Natural killer cell (primary cell): ENCODE measurements at regions of chr11 and their contacts with region 1.

Region 1: DNA sequence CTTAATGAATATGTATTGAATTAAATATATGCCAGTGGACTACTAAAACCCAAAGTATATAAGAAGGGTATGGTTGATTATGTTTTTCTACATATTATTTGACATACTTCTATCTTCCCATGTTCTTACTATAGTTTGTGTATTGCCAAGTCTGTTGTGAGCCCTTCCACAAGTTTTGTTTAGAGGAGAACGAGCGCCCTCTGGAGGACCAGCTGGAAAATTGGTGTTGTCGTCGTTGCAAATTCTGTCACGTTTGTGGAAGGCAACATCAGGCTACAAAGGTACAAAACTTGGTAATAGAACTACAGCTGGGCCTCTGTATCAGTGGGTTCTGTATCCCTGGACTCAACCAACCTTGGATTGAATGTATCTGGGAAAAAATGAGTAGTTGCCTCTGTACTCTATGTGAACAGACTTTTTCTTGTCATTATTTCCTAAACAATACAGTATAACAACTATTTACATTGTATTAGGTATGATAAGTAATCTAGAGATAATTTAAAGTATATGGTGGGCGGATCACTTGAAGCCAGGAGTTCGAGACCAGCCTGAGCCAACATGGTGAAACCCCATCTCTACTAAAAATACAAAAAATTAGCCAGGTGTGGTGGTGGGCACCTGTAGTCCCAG is 38.7 kb upstream of the TTC36 start:
- DNase-seq: peak; percentile 72 to 93
- ATAC-seq: peak; percentile 77 to 82 (median 79)
- H3K4me3 ChIP-seq: no peak overlapping the region
- H3K4me3 Mint-ChIP-seq: no peak overlapping the region
- H3K27ac ChIP-seq: no peak overlapping the region
- H3K27ac Mint-ChIP-seq: peak overlapping the region in 1 of 2 donors; percentile 72
- H3K4me1 ChIP-seq: no peaks in the 10 kb centered on the region
- H3K4me1 Mint-ChIP-seq: no peaks in the 10 kb centered on the region
- H3K27me3 ChIP-seq: no peaks in the 10 kb centered on the region
- H3K27me3 Mint-ChIP-seq: no peaks in the 10 kb centered on the region
- CTCF ChIP-seq: peak; percentile 83

Region 2: DNA sequence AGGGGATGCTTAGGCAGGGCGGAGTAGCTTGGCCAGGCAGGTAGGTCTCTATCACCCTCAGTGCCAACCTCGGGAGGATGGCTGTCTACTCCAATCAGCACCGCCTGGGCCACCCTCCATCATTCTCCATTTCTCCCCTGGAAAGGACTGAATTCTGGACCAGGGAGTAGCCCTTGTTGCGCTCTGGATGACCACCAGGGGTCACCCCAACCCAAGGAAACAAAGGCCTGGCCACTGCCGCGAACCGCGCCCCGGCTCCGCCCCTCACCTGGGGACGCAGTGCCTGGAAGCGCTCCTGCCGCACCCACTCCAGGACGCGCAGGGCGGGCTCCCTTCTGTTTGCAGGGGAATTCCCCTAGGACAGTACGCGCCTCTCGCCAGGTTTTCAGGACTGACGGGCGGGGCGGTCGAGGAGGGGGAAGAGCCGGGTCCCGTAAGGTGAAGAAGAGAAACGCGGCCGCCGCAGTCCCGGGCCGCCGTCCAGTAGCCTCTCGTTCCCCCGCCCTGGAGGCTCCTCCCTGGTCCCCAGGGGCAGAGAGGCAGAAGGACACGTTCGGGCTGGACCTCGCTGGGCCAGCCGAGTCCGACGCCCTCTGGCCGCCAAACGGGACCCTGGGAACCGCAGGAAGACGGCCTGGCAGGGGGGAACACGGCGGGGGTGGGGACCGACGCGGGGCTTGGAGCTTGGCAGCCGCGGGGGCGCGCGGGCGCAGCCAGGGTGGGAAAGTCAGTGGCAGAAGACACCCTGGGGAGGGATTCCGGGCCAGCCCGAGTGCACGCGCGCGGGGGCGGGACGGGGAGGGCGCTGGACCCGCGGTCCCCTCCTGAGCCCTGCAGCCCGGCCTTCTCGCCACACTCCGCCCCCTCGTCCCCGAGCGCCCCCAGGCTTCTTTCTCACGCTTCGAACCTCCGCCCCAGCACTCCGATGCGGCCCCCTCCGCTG is 343.0 kb before region 1 on chr11:
- intact Hi-C with region 1: loop called (anchors 1 kb)
- DNase-seq: peak; percentile 69 to 93
- ATAC-seq: peak; percentile 88 to 95 (median 94)
- H3K4me3 ChIP-seq: peak overlapping the region; percentile 63
- H3K4me3 Mint-ChIP-seq: peak overlapping the region; percentile 82
- H3K27ac ChIP-seq: no peak overlapping the region
- H3K27ac Mint-ChIP-seq: no peak overlapping the region
- H3K4me1 ChIP-seq: peaks cover 10% of the 10 kb centered on the region
- H3K4me1 Mint-ChIP-seq: peaks cover 0 to 4% of the 10 kb centered on the region in 2 donors
- H3K27me3 ChIP-seq: peaks cover 2% of the 10 kb centered on the region
- H3K27me3 Mint-ChIP-seq: peaks cover 47 to 72% of the 10 kb centered on the region in 2 donors
- CTCF ChIP-seq: peak; percentile 89

Region 3: DNA sequence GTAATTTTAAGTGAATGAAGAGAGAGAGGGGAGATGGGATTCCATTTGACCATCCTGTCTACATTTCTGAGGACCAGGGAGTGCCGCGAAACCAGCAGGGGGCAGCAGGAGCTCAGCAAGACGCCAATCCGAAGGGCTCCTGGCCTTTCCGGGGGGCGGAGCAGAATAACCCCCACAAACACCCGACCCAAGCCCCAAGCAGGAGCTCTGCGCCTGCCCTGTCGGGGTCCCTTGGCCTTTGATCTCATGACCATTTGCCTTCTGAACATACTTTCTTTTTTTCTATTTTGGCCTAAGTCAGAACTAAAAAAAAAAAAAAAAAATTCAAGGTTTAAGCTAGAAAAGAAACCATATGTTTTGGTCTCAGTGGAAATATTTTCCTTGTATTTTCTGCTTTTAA is 290.2 kb before region 1 on chr11:
- intact Hi-C with region 1: loop called (anchors 1 kb)
- DNase-seq: peak; percentile 79 to 90
- ATAC-seq: peak; percentile 75 to 91 (median 77)
- H3K4me3 ChIP-seq: no peak overlapping the region
- H3K4me3 Mint-ChIP-seq: no peak overlapping the region
- H3K27ac ChIP-seq: no peak overlapping the region
- H3K27ac Mint-ChIP-seq: peak overlapping the region in 1 of 2 donors; percentile 81
- H3K4me1 ChIP-seq: peaks cover 32% of the 10 kb centered on the region
- H3K4me1 Mint-ChIP-seq: peaks cover 5 to 11% of the 10 kb centered on the region in 2 donors
- H3K27me3 ChIP-seq: no peaks in the 10 kb centered on the region
- H3K27me3 Mint-ChIP-seq: no peaks in the 10 kb centered on the region
- CTCF ChIP-seq: peak; percentile 96

Region 4: GRCh38 chr11:118295834-118296454 is 192.7 kb before region 1 on chr11:
- intact Hi-C with region 1: loop called (anchors 5 kb)
- DNase-seq: peak in 1 of 2 donors; percentile 78
- ATAC-seq: peak in 2 of 3 donors; percentile 66 to 81
- H3K4me3 ChIP-seq: no peak overlapping the region
- H3K4me3 Mint-ChIP-seq: no peak overlapping the region
- H3K27ac ChIP-seq: no peak overlapping the region
- H3K27ac Mint-ChIP-seq: peak overlapping the region in 1 of 2 donors; percentile 75
- H3K4me1 ChIP-seq: peaks cover 7% of the 10 kb centered on the region
- H3K4me1 Mint-ChIP-seq: peaks cover 14 to 27% of the 10 kb centered on the region in 2 donors
- H3K27me3 ChIP-seq: no peaks in the 10 kb centered on the region
- H3K27me3 Mint-ChIP-seq: peaks cover 3 to 6% of the 10 kb centered on the region in 2 donors
- CTCF ChIP-seq: peak; percentile 67

Region 5: GRCh38 chr11:118364956-118365615 is 123.5 kb before region 1 on chr11:
- intact Hi-C with region 1: loop called (anchors 5 kb)
- DNase-seq: no peak
- ATAC-seq: no peak
- H3K4me3 ChIP-seq: no peak overlapping the region
- H3K4me3 Mint-ChIP-seq: no peak overlapping the region
- H3K27ac ChIP-seq: no peak overlapping the region
- H3K27ac Mint-ChIP-seq: no peak overlapping the region
- H3K4me1 ChIP-seq: peaks cover 7% of the 10 kb centered on the region
- H3K4me1 Mint-ChIP-seq: peaks cover 22 to 34% of the 10 kb centered on the region in 2 donors
- H3K27me3 ChIP-seq: no peaks in the 10 kb centered on the region
- H3K27me3 Mint-ChIP-seq: no peaks in the 10 kb centered on the region
- CTCF ChIP-seq: no peak

Region 6: DNA sequence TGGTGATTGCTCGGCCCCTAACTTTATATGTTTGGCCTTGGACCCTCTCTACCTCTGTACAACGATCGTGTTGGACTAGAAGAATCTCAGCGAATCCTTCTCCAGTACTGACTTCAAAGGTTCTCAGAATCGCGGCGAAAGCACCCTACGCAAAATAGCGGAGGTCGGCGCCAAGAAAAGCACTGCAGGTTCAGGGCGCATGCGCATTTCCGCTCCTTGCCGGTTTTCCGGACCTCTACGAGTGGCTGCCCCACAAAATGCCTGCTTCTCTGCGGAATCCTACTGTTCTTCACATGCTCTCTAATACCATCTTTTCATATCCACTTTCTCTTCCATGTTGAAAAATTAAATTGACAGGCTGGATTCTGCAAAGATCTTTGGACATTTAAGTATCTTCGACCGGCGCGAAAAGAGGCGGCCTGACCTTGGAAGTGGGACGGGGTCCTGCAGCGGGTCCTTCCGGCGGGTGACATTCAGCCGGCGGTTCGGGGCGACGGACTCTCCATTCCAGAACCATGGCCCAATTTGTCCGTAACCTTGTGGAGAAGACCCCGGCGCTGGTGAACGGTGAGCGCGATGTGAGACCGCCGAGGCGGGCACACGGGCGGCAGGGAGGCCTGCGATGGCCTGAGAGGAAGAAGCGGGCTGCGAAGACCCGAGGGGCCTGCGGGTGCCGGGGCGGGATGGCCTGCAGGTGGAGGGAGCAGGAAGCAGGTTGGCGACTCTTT is 87.3 kb before region 1 on chr11 and contains the start of gene ATP5MG:
- intact Hi-C with region 1: loop called (anchors 1 kb)
- DNase-seq: peak; percentile 83 to 98
- ATAC-seq: peak; percentile 81 to 84 (median 83)
- H3K4me3 ChIP-seq: peak within 1 kb of the TSS; percentile 77
- H3K4me3 Mint-ChIP-seq: peak within 1 kb of the TSS; percentile 100
- H3K27ac ChIP-seq: peak within 1 kb of the TSS; percentile 86
- H3K27ac Mint-ChIP-seq: peak within 1 kb of the TSS; percentile 99
- H3K4me1 ChIP-seq: peaks cover 15% of the 10 kb centered on the region
- H3K4me1 Mint-ChIP-seq: peaks cover 43 to 50% of the 10 kb centered on the region in 2 donors
- H3K27me3 ChIP-seq: no peaks in the 10 kb centered on the region
- H3K27me3 Mint-ChIP-seq: no peaks in the 10 kb centered on the region
- CTCF ChIP-seq: no peak
- total RNA-seq, gene ATP5MG: 90.3 to 135 (median 107) TPM

Region 7: GRCh38 chr11:118438314-118438931 is 50.2 kb before region 1 on chr11:
- intact Hi-C with region 1: loop called (anchors 2 kb)
- DNase-seq: peak; percentile 49 to 85
- ATAC-seq: peak; percentile 45 to 52 (median 46)
- H3K4me3 ChIP-seq: peak overlapping the region; percentile 69
- H3K4me3 Mint-ChIP-seq: peak overlapping the region; percentile 94
- H3K27ac ChIP-seq: peak overlapping the region; percentile 78
- H3K27ac Mint-ChIP-seq: peak overlapping the region; percentile 94 to 98
- H3K4me1 ChIP-seq: peaks cover 30% of the 10 kb centered on the region
- H3K4me1 Mint-ChIP-seq: peaks cover 80 to 85% of the 10 kb centered on the region in 2 donors
- H3K27me3 ChIP-seq: no peaks in the 10 kb centered on the region
- H3K27me3 Mint-ChIP-seq: no peaks in the 10 kb centered on the region
- CTCF ChIP-seq: no peak